ENCODE measurements at regions of chr2 and their contacts with region 1.

Region 1: DNA sequence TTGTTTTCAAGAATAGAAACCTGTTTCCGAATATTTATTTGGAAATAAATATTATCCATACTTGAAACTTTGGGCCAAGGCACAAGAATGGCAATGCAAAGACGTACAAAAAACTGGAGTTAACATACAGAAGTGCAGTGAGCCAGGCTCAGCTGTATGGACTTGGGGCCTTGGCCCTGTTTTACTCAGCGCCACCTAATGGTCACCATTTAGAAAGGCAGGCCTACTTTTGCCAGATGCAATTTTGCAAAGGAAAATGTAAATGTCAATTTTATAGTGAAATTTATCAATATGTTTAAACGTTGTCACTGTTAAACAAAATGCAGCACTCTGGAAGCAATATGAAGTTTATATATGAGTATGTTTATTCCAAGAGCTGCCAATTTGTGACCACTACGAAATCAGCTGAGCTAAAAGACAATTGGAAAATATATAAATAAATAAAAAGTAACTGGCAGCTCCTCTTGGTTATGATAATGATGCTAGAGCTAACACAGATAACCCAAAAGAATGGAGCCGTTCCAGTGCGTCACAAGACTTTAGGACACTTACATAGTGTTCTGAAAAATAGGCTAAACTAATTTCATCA is 155.0 kb downstream of the ARHGAP15 start:
- DNase-seq: peak; percentile 75
- H3K4me3 Mint-ChIP-seq: no peak overlapping the region
- H3K27ac Mint-ChIP-seq: no peak overlapping the region
- H3K4me1 Mint-ChIP-seq: peaks cover 13% of the 10 kb centered on the region
- H3K27me3 Mint-ChIP-seq: no peaks in the 10 kb centered on the region

Region 2: DNA sequence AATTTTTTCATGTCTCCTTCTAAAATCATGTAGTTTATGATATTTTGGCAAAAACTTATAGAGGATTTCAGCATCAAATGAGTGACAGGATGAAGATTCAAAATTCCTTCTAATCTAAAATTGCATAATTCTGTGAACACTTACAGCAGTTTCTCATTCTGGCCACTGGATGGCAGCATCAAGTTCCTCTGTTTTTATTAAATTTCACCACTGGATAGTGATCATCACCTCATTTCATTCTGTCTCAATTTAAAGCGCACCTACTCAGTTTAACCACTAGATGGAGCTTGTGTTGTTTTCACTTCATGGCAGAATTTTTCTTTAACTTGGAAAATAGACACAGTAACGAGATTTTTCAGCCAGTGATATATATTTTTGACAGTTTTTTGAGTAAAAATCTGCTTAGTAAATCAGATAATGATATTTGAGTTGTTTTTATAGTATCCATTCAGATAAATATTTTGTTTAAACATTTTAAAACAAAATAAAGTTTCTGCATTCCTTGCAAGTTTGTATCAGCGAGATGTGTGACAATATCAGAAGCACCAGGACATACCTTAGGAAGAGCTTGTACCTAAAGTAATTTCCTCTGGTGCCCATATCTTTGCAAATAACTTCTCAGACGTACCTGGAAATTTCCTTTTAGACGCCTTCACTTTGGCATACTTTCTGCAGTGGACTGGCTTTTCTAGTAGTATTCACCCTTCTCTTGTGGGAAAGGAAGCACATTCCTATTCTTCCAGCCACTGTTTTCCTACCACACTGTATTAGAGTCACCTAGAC is 249.7 kb before region 1 on chr2:
- intact Hi-C with region 1: loop called (anchors 1 kb)
- DNase-seq: peak; percentile 88
- H3K4me3 Mint-ChIP-seq: no peak overlapping the region
- H3K27ac Mint-ChIP-seq: no peak overlapping the region
- H3K4me1 Mint-ChIP-seq: peaks cover 11% of the 10 kb centered on the region
- H3K27me3 Mint-ChIP-seq: peaks cover 3% of the 10 kb centered on the region

Region 3: GRCh38 chr2:143246815-143247744 is 37.1 kb before region 1 on chr2:
- intact Hi-C with region 1: no loop called
- DNase-seq: no peak
- H3K4me3 Mint-ChIP-seq: no peak overlapping the region
- H3K27ac Mint-ChIP-seq: no peak overlapping the region
- H3K4me1 Mint-ChIP-seq: peaks cover 19% of the 10 kb centered on the region
- H3K27me3 Mint-ChIP-seq: no peaks in the 10 kb centered on the region

Region 4: DNA sequence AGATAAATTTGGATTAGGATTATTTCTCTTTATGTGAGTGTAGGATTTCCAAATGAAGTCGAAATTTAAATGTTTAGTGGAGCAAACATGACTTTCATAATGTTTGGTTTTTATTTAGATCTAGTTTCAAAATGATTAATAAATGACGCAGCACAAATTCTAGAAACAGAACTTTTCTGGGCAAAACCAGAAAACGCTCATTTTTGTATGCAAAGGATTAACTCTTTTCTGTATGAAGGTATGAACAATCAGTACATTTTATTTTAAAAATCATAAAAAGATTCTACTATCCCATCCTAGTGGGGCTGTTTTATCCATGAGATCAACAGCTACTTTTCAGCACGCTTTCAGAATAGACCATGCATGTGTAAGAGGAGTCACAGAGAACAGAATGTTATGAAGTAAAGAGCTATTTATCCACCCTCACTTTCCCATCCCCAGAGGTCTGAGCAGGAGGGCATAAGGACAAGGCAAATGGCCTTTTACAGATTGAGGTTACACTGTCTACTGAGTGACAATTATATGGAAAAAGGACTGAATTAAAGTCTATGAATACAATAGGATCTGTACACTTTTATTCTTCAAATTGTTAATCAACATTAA is 965.0 kb after region 1 on chr2:
- intact Hi-C with region 1: no loop called
- DNase-seq: no peak
- H3K4me3 Mint-ChIP-seq: no peak overlapping the region
- H3K27ac Mint-ChIP-seq: peak overlapping the region; percentile 15
- H3K4me1 Mint-ChIP-seq: peaks cover 9% of the 10 kb centered on the region
- H3K27me3 Mint-ChIP-seq: no peaks in the 10 kb centered on the region

Measured in activated CD4-positive, alpha-beta T cell treated with anti-CD3 and anti-CD28 coated beads, Interleukin-2, amount 10 ng/mL, durations not matched to agents 24 days and 14 days (primary cell).